MCF 10A (cell line): ENCODE measurements at regions of chr17 and their contacts with region 1.

Region 1: GRCh38 chr17:64679688-64680216 is 17.6 kb upstream of the SMURF2 start:
- DNase-seq: peak; percentile 90
- H3K4me3 Mint-ChIP-seq: peak overlapping the region; percentile 39
- H3K27ac Mint-ChIP-seq: peak overlapping the region; percentile 54
- H3K4me1 Mint-ChIP-seq: peaks cover 20% of the 10 kb centered on the region
- H3K27me3 Mint-ChIP-seq: no peaks in the 10 kb centered on the region
- CTCF ChIP-seq: no peak

Region 2: GRCh38 chr17:64707019-64707591 is 27.4 kb after region 1 on chr17:
- CTCF ChIA-PET with region 1: interaction called, 4 read pairs
- POLR2A ChIA-PET with region 1: interaction called, 8 read pairs
- intact Hi-C with region 1: loop called (anchors 1 kb)
- DNase-seq: peak; percentile 98
- H3K4me3 Mint-ChIP-seq: peak overlapping the region; percentile 38
- H3K27ac Mint-ChIP-seq: peak overlapping the region; percentile 73
- H3K4me1 Mint-ChIP-seq: peaks cover 19% of the 10 kb centered on the region
- H3K27me3 Mint-ChIP-seq: no peaks in the 10 kb centered on the region
- CTCF ChIP-seq: no peak

Region 3: GRCh38 chr17:64781014-64781753 is 101.4 kb after region 1 on chr17:
- CTCF ChIA-PET with region 1: no interaction called
- POLR2A ChIA-PET with region 1: no interaction called
- intact Hi-C with region 1: no loop called
- DNase-seq: peak; percentile 37
- H3K4me3 Mint-ChIP-seq: peak overlapping the region; percentile 75
- H3K27ac Mint-ChIP-seq: peak overlapping the region; percentile 9
- H3K4me1 Mint-ChIP-seq: peaks cover 9% of the 10 kb centered on the region
- H3K27me3 Mint-ChIP-seq: no peaks in the 10 kb centered on the region
- CTCF ChIP-seq: no peak